A549 (cell line): ENCODE measurements at regions of chr1 and their contacts with region 1.

Region 1: DNA sequence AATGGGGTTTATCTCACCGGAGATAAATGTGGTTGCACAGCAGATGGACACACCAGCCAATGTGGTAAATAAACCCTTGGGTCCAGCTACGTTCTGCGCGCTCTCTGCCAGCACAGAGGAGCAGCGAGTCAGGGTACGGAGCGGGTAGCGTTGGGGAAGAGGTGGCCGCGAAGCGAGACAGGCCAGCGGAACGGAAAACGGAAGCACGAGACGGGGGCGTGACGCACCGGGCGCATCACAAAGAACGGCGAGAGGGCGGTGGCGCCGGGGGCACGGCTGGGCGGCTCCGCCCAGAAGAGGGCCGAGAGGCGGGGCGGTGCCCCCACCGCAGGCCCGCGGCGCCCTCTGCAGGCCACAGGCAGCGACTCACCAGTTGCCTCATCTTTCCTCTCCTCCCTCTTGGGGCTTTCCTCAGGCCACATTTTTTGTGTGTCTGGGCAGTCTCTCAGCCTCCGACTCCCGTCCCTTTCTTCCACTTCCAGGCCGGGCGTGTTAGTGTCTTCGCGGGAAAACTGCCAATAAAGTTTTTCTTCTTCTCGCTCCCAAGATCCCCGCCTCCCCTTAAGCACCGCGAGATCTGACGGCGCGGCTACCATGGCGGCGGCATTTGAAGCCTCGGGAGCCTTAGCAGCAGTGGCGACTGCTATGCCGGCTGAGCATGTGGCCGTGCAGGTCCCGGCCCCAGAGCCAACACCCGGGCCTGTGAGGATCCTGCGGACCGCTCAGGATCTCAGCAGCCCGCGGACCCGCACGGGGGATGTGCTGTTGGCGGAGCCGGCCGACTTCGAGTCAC is at the start of gene DDX20:
- DNase-seq: peak; percentile 76 to 93
- ATAC-seq: peak; percentile 93
- H3K4me3 ChIP-seq: peak within 1 kb of the TSS; percentile 83
- H3K27ac ChIP-seq: peak within 1 kb of the TSS; percentile 94 to 100
- H3K4me1 ChIP-seq: peaks cover 13% of the 10 kb centered on the region; the same call in 2 of the 3 replicates
- CTCF ChIP-seq: peak; percentile 84
- EP300 ChIP-seq: no peak
- POLR2A ChIP-seq: peak; percentile 72
- RAD21 ChIP-seq: peak; percentile 45 to 65
- polyA plus RNA-seq, gene DDX20: 10.1 and 13.5 TPM in 2 replicates

Region 2: DNA sequence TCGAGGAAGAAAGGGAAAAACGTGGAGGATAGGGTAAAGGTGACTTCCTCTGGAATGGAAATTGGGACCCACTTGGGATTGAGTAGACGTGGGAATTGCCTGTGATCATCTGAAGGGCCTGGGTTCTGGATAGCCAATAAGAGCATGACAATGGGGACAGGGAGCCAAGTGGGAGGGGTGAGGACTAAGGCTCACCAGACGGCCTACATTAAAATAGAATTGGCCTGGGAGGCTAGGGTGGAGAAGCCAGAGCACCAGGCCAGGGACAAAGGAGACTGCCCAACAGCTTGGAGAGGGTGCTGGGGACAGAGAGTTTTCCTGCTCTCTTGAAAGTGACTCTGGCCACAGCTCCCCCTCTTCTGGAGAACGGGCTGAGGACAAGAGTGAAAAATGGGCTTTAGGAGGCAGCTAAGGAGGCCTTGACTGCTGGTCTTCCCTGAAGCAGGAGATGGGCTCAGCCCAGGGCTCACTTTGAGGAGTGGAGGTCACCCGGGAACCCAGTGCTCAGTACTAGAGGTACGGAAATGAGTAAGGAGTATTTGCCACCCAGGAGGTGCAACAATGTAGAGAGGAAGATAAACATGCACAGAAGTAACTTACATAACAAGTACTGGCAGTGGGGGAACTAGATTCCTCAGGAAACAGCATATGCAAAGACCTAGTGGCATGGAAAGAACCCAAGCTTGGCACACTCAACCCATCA is 35.1 kb before region 1 on chr1:
- CTCF ChIA-PET with region 1: interaction called, 12 read pairs
- POLR2A ChIA-PET with region 1: no interaction called
- DNase-seq: no peak
- ATAC-seq: no peak
- H3K4me3 ChIP-seq: no peak overlapping the region
- H3K27ac ChIP-seq: no peak overlapping the region
- H3K4me1 ChIP-seq: peaks cover 4% of the 10 kb centered on the region; the same call in 1 of the 3 replicates
- CTCF ChIP-seq: no peak
- EP300 ChIP-seq: no peak
- POLR2A ChIP-seq: no peak
- RAD21 ChIP-seq: no peak

Region 3: DNA sequence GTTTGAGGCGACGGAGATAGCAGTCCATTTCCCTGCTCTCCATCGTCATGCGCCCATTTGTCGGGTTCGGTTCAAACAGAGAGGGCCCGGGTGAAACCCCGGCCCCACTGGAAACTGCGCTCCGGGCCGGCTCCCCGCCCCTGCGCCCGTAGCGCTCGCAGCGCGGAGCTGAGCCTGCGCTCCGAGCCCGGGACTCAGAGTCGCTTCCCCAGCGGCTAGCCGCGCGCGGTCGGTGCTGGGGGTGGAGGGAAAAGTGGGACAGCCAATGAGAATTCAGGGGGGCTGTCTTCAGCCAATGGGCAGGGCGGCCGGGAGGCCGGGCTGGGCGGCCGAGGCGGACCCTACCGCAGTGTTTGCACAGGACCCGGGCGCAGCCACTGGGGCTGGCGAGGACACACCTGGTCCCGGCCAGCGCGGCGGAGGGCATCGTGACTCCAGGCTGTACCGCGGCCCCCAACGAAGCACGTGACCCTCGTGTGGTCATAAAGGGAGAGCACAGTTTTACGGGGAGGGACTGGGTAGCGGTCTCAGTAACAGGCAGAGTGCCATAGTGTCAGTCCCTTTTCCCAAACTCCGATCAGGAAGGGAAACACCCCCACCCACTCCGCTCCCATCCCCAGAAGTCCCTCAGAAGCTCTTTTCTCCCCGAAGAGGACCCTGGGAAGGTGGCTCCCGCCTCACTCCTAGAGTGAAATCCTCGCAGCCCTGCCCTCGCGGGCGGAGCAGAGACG is 16.2 kb before region 1 on chr1 and contains the start of gene INKA2:
- CTCF ChIA-PET with region 1: interaction called, 4 read pairs
- POLR2A ChIA-PET with region 1: interaction called, 12 read pairs
- DNase-seq: peak; percentile 72 to 86
- ATAC-seq: peak; percentile 87 to 93
- H3K4me3 ChIP-seq: peak within 1 kb of the TSS; percentile 54
- H3K27ac ChIP-seq: peak within 1 kb of the TSS; percentile 78 to 95
- H3K4me1 ChIP-seq: peaks cover 6% of the 10 kb centered on the region; the same call in 2 of the 3 replicates
- CTCF ChIP-seq: no peak
- EP300 ChIP-seq: no peak
- POLR2A ChIP-seq: peak; percentile 60
- RAD21 ChIP-seq: no peak
- polyA plus RNA-seq, gene INKA2: 1.2 TPM in 2 replicates

Region 4: GRCh38 chr1:111769517-111770146 is 14.1 kb after region 1 on chr1:
- CTCF ChIA-PET with region 1: interaction called, 18 read pairs
- POLR2A ChIA-PET with region 1: no interaction called
- DNase-seq: peak; percentile 18 to 63
- ATAC-seq: peak; percentile 51 to 54; a peak in 3 of 6 replicates
- H3K4me3 ChIP-seq: no peak overlapping the region
- H3K27ac ChIP-seq: no peak overlapping the region
- H3K4me1 ChIP-seq: no peaks in the 10 kb centered on the region
- CTCF ChIP-seq: peak; percentile 83
- EP300 ChIP-seq: no peak
- POLR2A ChIP-seq: no peak
- RAD21 ChIP-seq: peak; percentile 64 to 76

Region 5: GRCh38 chr1:111833334-111833733 is 77.8 kb after region 1 on chr1:
- CTCF ChIA-PET with region 1: no interaction called
- POLR2A ChIA-PET with region 1: no interaction called
- DNase-seq: no peak
- ATAC-seq: no peak
- H3K4me3 ChIP-seq: no peak overlapping the region
- H3K27ac ChIP-seq: no peak overlapping the region
- H3K4me1 ChIP-seq: no peaks in the 10 kb centered on the region
- CTCF ChIP-seq: no peak
- EP300 ChIP-seq: no peak
- POLR2A ChIP-seq: no peak
- RAD21 ChIP-seq: no peak